Breast epithelium (tissue), 4 donors: ENCODE measurements at regions of chr11 and their contacts with region 1.

Region 1: GRCh38 chr11:65382033-65382807 is at the start of gene SLC25A45:
- DNase-seq: peak; percentile 92 to 95
- H3K4me3 ChIP-seq: peak within 1 kb of the TSS; percentile 42 to 68 (median 53)
- H3K27ac ChIP-seq: peak within 1 kb of the TSS; percentile 98 to 99
- H3K4me1 ChIP-seq: peaks cover 0 to 20% of the 10 kb centered on the region in 2 donors
- H3K27me3 ChIP-seq: no peaks in the 10 kb centered on the region
- CTCF ChIP-seq: peak; percentile 93 to 97 (median 95)
- POLR2A ChIP-seq: peak; percentile 22
- total RNA-seq, gene SLC25A45: 5.4 to 9.1 (median 6.6) TPM

Region 2: DNA sequence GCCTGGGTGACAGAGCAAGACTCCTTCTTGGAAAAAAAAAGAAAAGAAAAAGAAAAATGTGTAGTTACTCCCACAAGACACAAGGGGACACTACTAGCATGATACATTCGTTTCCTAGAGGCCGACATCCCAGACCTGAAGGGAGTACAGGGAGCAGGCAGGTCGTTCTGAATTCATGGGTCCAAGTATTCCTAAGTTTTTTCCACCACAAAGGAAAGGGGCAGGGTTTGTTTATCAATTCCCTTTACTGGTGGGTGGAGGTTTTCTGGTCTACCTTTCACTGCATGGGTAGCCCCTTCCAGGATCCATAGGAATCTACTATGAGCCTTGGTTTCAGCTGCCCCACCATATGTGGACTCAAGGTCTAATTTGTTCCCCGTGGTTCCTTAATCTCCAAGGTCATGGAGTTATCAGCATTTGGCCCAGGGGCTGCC is 15.9 kb before region 1 on chr11:
- intact Hi-C with region 1: no loop called
- DNase-seq: peak in 1 of 2 donors; percentile 41
- H3K4me3 ChIP-seq: no peak overlapping the region
- H3K27ac ChIP-seq: no peak overlapping the region
- H3K4me1 ChIP-seq: no peaks in the 10 kb centered on the region
- H3K27me3 ChIP-seq: no peaks in the 10 kb centered on the region
- CTCF ChIP-seq: peak; percentile 80 to 95 (median 88)
- POLR2A ChIP-seq: no peak

Region 3: DNA sequence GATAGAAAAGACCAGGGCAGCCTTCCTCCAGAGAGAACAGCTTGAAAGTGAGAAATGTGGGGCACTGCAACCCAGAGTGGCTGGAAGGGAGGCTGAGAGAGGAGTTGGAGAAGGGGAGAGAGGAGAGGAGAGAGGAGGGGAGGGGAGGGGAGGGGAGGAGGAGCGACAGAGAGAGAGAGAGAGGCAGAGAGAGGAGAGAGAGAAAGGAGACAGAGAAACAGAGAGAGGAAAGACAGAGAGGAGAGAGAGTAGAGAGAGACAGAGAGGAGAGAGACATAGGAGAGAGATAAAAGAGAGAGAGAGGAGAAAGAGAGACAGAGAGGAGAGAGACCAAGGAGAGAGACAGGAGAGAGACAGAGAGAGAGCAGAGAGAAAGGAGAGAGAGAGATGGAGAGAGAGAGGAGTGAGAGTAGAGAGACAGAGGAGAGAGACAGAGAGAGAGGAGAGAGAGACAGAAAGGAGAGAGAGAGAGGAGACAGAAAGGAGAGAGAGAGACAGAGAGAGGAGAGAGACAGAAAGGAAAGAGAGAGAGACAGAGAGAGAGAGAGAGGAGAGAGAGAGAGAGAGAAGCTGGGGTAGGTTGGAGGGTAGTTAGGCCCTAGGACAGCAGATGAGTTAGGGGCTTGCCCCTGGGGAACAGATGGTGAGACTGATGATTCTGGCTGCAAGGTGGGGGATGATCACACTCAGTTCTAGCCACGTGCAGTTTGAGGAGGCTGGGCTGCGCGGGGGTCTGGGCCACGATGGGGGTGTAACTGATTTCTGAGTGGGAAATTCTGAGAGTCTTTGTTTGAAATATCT is 134.1 kb after region 1 on chr11:
- intact Hi-C with region 1: loop called (anchors 10 kb)
- DNase-seq: no peak
- H3K4me3 ChIP-seq: no peak overlapping the region
- H3K27ac ChIP-seq: no peak overlapping the region
- H3K4me1 ChIP-seq: no peaks in the 10 kb centered on the region
- H3K27me3 ChIP-seq: no peaks in the 10 kb centered on the region
- CTCF ChIP-seq: no peak
- POLR2A ChIP-seq: no peak